Activated CD8-positive, alpha-beta memory T cell treated with anti-CD3 and anti-CD28 coated beads, Interleukin-2, amount 10 ng/mL, durations not matched to agents 7 days and 5 days (primary cell): ENCODE measurements at regions of chr14 and their contacts with region 1.

Region 1: DNA sequence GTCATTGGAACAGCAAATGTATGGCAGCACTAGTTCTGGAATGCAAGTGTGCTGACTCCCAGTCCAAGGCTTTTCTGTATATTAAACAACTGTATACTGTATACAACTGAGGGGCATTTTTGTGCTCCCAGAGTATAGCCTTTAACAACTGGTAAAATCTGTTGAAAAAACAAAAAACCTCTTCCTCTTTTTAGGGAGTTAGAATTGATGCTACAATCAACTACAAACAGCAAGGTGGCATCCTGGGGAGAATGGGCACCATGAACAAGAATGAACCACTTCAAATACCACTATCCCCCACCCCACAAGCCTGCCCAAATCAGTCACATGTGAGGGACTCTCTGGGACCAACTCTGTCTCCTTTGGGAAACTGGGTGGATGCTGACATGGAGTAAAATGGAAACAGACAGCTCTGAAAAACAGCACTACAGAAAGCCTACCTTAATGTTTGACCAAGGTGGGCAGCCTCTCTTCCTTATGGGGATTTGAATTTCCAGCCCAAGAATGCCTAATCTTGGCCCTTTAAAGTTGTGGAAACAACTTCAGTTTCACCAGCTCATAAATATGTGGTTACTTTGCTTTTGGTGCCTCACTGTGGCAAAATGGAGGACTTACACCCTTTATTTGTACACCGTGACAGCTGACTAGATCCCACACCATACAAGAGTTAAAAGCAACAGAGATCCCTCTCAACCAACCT is 7.5 kb downstream of the VTI1B start:
- DNase-seq: peak; percentile 52
- ATAC-seq: peak; percentile 84
- H3K4me3 Mint-ChIP-seq: no peak overlapping the region
- H3K27ac Mint-ChIP-seq: peak overlapping the region; percentile 70
- H3K4me1 Mint-ChIP-seq: peaks cover 41% of the 10 kb centered on the region
- H3K27me3 Mint-ChIP-seq: no peaks in the 10 kb centered on the region

Region 2: DNA sequence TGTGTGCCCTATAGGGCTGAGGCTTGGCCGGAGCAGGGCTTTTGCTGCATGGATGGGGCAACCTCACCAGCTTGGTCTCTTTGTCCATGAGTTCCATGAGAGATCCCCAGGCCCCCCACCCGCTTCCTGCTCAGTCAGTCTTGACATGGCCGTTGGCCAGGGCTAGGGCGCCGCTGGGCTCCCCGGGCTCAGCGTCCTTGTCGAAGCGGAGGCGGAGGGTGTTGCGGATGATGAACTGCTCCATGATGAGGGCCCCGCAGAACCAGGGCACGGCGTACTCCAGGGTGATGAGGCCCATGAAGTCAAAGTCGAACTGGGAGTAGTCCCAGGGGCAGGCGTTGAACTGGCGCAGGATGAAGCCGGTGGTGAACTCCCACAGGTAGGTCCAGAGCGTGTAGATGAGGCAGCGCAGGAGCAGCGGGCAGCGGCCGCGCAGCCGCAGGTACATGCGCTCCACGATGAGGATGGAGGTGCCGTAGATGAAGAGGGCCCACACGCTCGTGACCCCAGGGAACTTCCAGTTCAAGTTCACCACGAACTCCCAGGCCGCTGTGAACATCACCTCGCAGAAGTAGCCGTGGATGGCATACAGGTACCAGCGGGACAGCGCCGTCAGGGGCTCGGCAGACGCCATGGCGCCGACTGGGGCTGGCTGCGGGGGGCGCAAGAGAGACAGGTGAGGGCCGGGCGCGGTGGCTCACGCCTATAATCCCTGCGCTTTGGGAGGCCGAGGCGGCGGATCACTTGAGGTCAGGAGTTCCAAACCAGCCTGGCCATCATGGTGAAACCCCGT is 193.4 kb before region 1 on chr14:
- CTCF ChIA-PET with region 1: no interaction called
- DNase-seq: no peak
- ATAC-seq: no peak
- H3K4me3 Mint-ChIP-seq: no peak overlapping the region
- H3K27ac Mint-ChIP-seq: no peak overlapping the region
- H3K4me1 Mint-ChIP-seq: peaks cover 3% of the 10 kb centered on the region
- H3K27me3 Mint-ChIP-seq: no peaks in the 10 kb centered on the region

Region 3: GRCh38 chr14:67539116-67539515 is 127.8 kb before region 1 on chr14:
- CTCF ChIA-PET with region 1: no interaction called
- DNase-seq: no peak
- ATAC-seq: no peak
- H3K4me3 Mint-ChIP-seq: no peak overlapping the region
- H3K27ac Mint-ChIP-seq: no peak overlapping the region
- H3K4me1 Mint-ChIP-seq: no peaks in the 10 kb centered on the region
- H3K27me3 Mint-ChIP-seq: peaks cover 65% of the 10 kb centered on the region

Region 4: DNA sequence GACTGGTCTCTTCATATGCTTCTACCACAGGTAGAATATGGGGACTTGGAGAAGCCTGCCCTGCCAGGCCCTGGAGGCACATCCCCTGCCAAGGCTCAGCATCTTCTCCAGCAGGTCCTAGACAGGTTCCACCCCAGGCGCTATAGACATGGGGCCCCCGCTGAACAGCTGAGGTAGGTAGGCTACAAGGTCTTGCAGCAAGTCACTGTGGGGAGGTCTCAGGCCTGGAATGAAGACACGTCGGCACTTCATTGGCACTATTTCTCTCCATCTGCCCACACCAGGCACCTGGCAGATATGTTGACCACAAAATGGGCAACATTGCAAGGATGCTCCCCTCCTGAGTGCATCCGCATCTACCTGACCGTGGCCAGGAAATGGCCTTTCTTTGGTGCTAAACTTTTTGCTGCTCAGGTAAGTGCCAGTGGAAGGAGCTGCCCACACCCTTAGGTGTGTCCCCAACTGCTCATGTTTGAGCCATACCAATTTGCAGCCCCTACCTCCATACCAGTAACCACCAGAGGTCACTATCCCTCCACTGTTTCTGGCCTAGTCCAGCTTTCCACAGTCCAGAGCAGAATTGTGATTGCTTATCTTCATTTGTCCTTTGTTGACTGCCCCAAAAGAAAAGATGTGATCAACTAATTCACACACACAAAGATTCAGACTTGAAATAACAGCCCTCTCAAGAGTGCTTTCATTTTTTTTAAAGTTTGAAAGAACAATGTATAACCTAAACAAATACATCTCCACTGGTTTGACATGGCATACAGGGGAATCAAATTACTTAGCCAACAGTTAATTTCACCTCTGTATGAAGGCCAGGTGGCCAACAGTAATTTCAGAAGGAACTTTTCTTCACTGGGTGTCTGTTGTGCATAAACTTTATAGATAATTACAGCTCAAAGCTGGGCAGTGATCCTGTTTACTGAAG is 82.9 kb before region 1 on chr14:
- CTCF ChIA-PET with region 1: interaction called, 15 read pairs
- DNase-seq: peak; percentile 50
- ATAC-seq: peak; percentile 78
- H3K4me3 Mint-ChIP-seq: no peak overlapping the region
- H3K27ac Mint-ChIP-seq: no peak overlapping the region
- H3K4me1 Mint-ChIP-seq: peaks cover 12% of the 10 kb centered on the region
- H3K27me3 Mint-ChIP-seq: no peaks in the 10 kb centered on the region

Region 5: GRCh38 chr14:67619446-67620216 is 47.3 kb before region 1 on chr14 and contains the start of gene ARG2:
- CTCF ChIA-PET with region 1: interaction called, 96 read pairs
- DNase-seq: peak; percentile 98
- ATAC-seq: peak; percentile 92
- H3K4me3 Mint-ChIP-seq: peak within 1 kb of the TSS; percentile 81
- H3K27ac Mint-ChIP-seq: peak within 1 kb of the TSS; percentile 82
- H3K4me1 Mint-ChIP-seq: peaks cover 34% of the 10 kb centered on the region
- H3K27me3 Mint-ChIP-seq: peaks cover 18% of the 10 kb centered on the region
- total RNA-seq, gene ARG2: 6.2 to 13.6 TPM

Region 6: GRCh38 chr14:67695394-67695949 is 28.6 kb after region 1 on chr14 and contains the start of gene RDH11:
- CTCF ChIA-PET with region 1: interaction called, 12 read pairs
- DNase-seq: peak; percentile 92
- ATAC-seq: peak; percentile 89
- H3K4me3 Mint-ChIP-seq: peak within 1 kb of the TSS; percentile 85
- H3K27ac Mint-ChIP-seq: peak within 1 kb of the TSS; percentile 91
- H3K4me1 Mint-ChIP-seq: peaks cover 33% of the 10 kb centered on the region
- H3K27me3 Mint-ChIP-seq: no peaks in the 10 kb centered on the region
- total RNA-seq, gene RDH11: 49.6 to 59.8 TPM

Region 7: DNA sequence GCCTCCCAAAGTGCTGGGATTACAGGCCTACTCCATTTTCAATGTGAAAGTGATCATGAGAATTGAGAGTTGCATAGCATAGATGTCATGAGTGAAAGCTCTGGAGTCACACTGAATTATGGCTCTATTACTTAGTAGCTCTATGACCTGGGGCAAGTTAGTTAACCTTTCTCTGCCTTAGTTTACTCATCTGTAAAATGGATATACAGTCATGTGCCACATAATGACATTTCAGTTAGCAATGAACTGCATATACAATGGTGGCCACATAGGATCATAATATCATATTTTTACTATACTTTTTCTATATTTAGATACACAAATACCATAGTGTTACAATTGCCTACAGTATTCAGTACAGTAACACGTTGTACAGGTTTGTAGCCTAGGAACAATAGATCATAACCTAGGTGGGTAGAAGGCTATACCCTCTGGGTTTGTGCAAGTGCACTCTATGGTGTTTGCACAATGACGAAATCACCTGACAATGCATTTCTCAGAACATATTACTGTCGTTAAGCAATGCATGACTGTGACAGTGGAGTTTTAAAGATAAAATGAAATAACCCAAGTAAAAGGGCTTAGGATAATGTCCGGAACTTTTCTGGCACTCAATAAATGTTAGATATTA is 96.4 kb after region 1 on chr14:
- CTCF ChIA-PET with region 1: no interaction called
- DNase-seq: no peak
- ATAC-seq: no peak
- H3K4me3 Mint-ChIP-seq: no peak overlapping the region
- H3K27ac Mint-ChIP-seq: no peak overlapping the region
- H3K4me1 Mint-ChIP-seq: peaks cover 4% of the 10 kb centered on the region
- H3K27me3 Mint-ChIP-seq: no peaks in the 10 kb centered on the region